ENCODE measurements at regions of chr2 and their contacts with region 1.

Region 1: DNA sequence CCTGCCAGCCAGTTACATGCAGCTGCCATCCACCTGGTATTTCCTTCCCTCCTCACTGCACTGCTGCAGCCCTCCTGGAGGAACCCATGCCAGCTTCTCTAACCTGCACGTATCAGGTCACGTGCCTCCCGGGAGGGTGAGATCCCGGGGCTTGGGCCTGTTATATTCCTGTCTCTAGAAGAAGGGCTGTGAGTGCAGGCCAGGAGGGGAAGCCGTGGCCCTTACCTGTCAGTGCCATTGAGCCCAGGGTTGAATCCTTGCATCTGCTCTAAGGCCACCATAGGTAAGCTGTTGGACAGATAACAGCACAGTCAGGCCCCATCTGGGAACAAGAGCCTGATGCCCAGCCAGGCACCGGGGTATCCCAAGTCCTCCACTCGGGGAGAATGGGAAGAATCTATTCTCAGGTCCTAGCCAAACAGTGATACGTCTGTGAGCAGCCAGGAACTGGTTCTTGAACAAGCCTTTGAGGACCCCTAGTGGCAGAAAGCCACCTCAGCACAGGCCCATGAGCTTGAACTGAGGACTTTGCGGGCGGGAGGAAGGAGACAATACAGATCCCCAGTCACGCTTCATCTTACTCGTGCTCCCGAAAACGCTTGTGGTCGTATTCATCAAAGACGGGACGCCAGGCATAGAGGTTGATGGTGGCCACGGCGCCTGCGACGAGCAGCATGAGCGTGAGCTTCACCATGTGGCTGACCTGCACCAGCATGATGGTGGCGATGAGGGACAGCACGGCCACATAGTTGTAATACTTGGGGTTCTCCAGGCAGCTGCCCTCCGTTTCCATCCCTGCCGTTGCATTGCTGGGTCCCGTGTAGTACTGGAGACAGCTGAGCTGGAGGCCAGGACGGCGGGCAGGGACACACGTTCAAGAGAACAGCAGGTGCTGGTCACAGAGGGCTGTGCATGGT is 34.4 kb downstream of the CENPO start:
- DNase-seq: peak; percentile 82
- ATAC-seq: peak; percentile 89
- H3K4me3 ChIP-seq: no peak overlapping the region
- H3K4me3 Mint-ChIP-seq: no peak overlapping the region
- H3K27ac ChIP-seq: no peak overlapping the region
- H3K27ac Mint-ChIP-seq: no peak overlapping the region
- H3K4me1 ChIP-seq: peaks cover 0 to 4% of the 10 kb centered on the region in 2 donors
- H3K4me1 Mint-ChIP-seq: no peaks in the 10 kb centered on the region
- H3K27me3 ChIP-seq: no peaks in the 10 kb centered on the region
- H3K27me3 Mint-ChIP-seq: no peaks in the 10 kb centered on the region
- CTCF ChIP-seq: peak; percentile 89

Region 2: GRCh38 chr2:23939987-23940717 is 887.4 kb before region 1 on chr2 and contains the start of gene UBXN2A:
- CTCF ChIA-PET with region 1: no interaction called
- POLR2A ChIA-PET with region 1: no interaction called
- intact Hi-C with region 1: no loop called
- DNase-seq: peak; percentile 91
- ATAC-seq: peak; percentile 84
- H3K4me3 ChIP-seq: peak within 1 kb of the TSS; percentile 65 to 91 (median 80)
- H3K4me3 Mint-ChIP-seq: peak within 1 kb of the TSS; percentile 91
- H3K27ac ChIP-seq: peak within 1 kb of the TSS; percentile 36 to 72
- H3K27ac Mint-ChIP-seq: peak within 1 kb of the TSS; percentile 85
- H3K4me1 ChIP-seq: peaks cover 12 to 18% of the 10 kb centered on the region in 2 donors
- H3K4me1 Mint-ChIP-seq: peaks cover 21% of the 10 kb centered on the region
- H3K27me3 ChIP-seq: no peaks in the 10 kb centered on the region
- H3K27me3 Mint-ChIP-seq: no peaks in the 10 kb centered on the region
- CTCF ChIP-seq: no peak
- total RNA-seq, gene UBXN2A: 13.4 and 14.2 TPM in 2 replicates

Region 3: DNA sequence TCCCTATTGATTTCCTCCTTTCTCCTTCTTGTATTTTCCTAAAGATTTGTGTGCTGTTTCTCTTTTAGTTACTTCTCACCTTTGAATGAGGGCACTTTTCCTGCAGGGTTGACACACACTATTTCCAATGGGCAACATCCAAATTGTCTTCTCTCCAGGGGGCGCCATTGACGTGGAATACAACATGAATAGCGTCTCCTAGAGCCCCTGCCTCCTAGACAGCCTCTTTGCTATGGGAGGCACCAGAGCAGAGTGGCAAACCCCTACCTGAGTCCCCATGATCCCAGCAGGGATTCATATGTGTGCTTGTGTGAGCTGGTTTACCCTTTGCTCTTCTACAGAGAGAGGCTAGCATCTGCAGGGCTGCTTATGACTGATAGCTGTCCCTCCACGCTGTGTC is 405.9 kb before region 1 on chr2:
- CTCF ChIA-PET with region 1: interaction called, 92 read pairs
- POLR2A ChIA-PET with region 1: no interaction called
- intact Hi-C with region 1: loop called (anchors 1 kb)
- DNase-seq: peak; percentile 54
- ATAC-seq: no peak
- H3K4me3 ChIP-seq: no peak overlapping the region
- H3K4me3 Mint-ChIP-seq: no peak overlapping the region
- H3K27ac ChIP-seq: no peak overlapping the region
- H3K27ac Mint-ChIP-seq: no peak overlapping the region
- H3K4me1 ChIP-seq: no peaks in the 10 kb centered on the region
- H3K4me1 Mint-ChIP-seq: no peaks in the 10 kb centered on the region
- H3K27me3 ChIP-seq: no peaks in the 10 kb centered on the region
- H3K27me3 Mint-ChIP-seq: no peaks in the 10 kb centered on the region
- CTCF ChIP-seq: peak; percentile 52

Region 4: DNA sequence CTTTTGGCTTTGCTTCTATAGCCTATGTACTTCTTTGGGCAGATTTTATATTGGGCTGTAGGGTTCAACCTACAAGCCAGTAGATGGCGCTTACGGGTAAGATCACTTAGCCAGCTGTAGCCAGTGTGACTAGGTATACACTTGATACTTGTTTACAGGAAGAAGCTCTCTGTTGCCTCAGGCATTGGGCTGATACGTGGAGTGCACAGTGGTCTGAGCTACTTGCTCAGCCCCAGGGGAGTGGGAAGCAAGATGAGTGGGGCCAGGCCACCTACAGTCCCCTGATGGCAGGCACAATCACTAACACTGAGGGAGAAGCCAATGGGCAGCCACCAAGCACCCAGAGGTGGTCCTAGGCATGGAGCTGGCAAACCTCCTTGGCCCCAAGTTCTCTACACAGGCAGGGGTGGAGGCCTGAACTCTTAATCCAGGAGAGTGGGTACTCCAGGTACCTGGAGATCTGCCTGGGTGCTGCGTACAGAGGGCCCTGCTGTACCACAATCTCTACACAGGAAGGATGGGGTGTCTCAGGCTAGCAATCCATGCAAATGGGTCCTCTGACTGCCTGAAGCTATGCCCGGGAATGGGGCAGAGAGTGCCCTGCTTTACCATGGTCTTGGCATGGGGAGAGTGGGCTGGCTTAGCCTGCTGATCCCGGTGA is 214.3 kb before region 1 on chr2:
- CTCF ChIA-PET with region 1: interaction called, 3 read pairs
- POLR2A ChIA-PET with region 1: no interaction called
- intact Hi-C with region 1: loop called (anchors 1 kb)
- DNase-seq: peak; percentile 36
- ATAC-seq: peak; percentile 10
- H3K4me3 ChIP-seq: no peak overlapping the region
- H3K4me3 Mint-ChIP-seq: peak overlapping the region; percentile 1
- H3K27ac ChIP-seq: no peak overlapping the region
- H3K27ac Mint-ChIP-seq: peak overlapping the region; percentile 7
- H3K4me1 ChIP-seq: peaks cover 0 to 5% of the 10 kb centered on the region in 2 donors
- H3K4me1 Mint-ChIP-seq: peaks cover 16% of the 10 kb centered on the region
- H3K27me3 ChIP-seq: no peaks in the 10 kb centered on the region
- H3K27me3 Mint-ChIP-seq: no peaks in the 10 kb centered on the region
- CTCF ChIP-seq: no peak

Region 5: DNA sequence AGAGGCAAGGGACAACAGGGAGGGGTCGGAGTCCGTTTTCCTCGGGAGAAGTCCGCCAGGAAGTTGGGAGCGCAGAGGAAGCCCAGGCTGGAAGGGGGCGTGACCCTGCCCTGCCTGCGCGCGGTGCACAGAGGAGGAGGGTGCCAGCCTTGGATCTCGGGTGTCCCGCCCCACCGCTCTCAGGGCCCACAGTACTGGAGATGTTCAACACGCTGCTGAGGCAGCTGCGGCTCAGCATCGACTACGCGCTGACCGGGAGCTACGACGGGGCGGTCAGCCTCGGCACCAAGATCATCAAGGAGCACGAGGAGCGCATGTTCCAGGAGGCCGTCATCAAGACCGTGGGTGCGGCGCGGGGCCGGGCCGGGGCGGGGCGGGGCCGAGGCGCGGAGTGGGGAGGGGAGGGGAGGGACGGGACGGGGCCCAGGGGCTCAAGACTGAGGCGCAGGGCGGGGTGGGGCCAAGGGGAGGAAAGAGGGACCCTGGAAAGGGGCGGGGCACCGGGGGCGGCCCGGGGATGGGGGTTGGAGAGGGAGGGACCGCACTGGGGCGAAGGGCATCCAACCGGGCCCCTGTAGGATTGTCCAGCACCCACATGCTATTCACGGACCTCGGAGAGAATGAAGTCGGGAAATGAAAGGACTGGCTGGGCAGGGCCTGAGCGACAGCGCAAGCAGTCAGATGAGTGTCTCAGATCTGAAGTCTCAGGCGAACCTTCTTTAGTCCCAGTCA is 304.2 kb after region 1 on chr2:
- CTCF ChIA-PET with region 1: interaction called, 39 read pairs
- POLR2A ChIA-PET with region 1: no interaction called
- intact Hi-C with region 1: loop called (anchors 5 kb)
- DNase-seq: peak; percentile 42
- ATAC-seq: no peak
- H3K4me3 ChIP-seq: peak overlapping the region in 3 of 5 experiments; percentile 8 to 39 (median 23)
- H3K4me3 Mint-ChIP-seq: peak overlapping the region; percentile 81
- H3K27ac ChIP-seq: no peak overlapping the region
- H3K27ac Mint-ChIP-seq: no peak overlapping the region
- H3K4me1 ChIP-seq: peaks cover 11 to 18% of the 10 kb centered on the region in 2 donors
- H3K4me1 Mint-ChIP-seq: peaks cover 16% of the 10 kb centered on the region
- H3K27me3 ChIP-seq: peaks cover 0 to 41% (median 22%) of the 10 kb centered on the region in 4 experiments
- H3K27me3 Mint-ChIP-seq: peaks cover 53% of the 10 kb centered on the region
- CTCF ChIP-seq: no peak